Activated naive CD4-positive, alpha-beta T cell treated with anti-CD3 and anti-CD28 coated beads for 36 hours (primary cell): ENCODE measurements at regions of chr5 and their contacts with region 1.

Region 1: DNA sequence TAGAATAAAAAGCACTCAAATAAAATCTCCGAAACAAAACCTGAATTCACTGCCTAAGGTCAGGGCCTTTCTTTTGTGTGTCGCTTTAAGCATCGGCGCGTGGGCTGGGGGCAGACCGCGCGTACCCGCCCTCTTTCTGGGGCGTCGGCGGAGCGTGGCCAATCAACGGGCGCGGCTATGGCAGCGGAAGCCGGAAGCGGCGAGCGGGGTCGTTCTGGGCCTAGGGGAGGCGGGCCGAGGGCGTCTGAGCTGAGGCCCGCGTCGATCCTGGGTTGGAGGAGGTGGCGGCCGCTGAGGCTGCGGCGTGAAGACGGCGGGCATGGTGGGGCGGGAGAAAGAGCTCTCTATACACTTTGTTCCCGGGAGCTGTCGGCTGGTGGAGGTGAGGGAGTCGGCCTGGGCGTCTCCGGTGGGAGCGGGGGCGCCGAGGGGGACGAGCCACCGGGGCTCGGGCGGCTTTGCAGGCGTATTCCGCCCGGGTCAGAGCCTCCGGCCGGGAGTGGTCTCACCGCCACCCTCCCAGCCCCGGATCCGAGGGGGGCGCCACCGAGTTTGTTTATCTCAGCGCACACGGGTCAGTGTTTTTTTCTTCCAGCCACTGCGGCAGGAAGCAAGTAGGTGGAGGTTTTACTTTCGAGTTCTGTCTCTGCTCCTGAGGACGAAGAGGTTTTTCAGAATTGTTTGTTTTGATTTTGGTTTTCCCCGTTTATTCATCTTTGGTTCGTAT is at the start of gene MAT2B:
- DNase-seq: peak; percentile 95
- H3K4me3 Mint-ChIP-seq: peak within 1 kb of the TSS; percentile 85
- H3K27ac Mint-ChIP-seq: peak within 1 kb of the TSS; percentile 98
- H3K4me1 Mint-ChIP-seq: peaks cover 32% of the 10 kb centered on the region
- H3K27me3 Mint-ChIP-seq: no peaks in the 10 kb centered on the region
- total RNA-seq, gene MAT2B: 87.6 to 88.7 TPM

Region 2: DNA sequence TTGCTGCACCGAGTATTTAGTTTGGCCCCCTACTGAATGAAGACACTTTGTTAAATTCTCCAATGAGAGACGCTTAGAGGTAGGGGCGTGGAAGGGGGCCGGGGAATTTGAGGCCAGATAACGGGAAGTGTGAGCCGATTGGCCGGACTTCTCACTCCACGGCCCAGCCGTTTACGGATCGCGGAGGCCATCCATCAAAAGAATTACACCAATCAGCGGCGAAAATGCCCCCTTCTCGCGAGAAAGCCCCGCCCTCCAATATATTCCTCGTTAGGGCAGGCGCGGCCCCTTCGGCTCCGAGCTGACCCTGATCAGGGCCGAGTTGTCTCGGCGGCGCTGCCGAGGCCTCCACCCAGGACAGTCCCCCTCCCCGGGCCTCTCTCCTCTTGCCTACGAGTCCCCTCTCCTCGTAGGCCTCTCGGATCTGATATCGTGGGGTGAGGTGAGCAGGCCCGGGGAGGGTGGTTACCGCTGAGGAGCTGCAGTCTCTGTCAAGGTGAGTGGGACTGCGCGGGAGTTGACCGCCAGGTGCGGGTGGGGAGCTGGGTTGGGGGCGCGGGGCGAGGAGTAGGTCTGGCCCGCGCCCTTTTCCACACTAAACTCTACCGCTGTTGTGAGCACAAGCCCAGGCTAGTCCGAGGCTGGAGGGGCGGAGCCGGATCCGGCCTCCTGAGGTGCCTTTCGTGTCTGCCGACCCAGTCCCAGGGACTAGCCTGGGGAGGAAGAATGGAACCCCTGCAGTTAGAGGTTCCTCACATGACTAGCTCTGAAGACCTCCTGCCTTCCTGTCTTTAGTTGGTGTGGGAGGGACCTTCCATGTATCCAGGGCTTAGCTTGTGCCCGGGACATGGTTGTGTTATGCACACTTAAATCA is 68.0 kb before region 1 on chr5 and contains the start of gene CCNG1:
- CTCF ChIA-PET with region 1: interaction called, 5 read pairs
- intact Hi-C with region 1: loop called (anchors 1 kb)
- DNase-seq: peak; percentile 95
- H3K4me3 Mint-ChIP-seq: peak within 1 kb of the TSS; percentile 91
- H3K27ac Mint-ChIP-seq: peak within 1 kb of the TSS; percentile 90
- H3K4me1 Mint-ChIP-seq: peaks cover 44% of the 10 kb centered on the region
- H3K27me3 Mint-ChIP-seq: no peaks in the 10 kb centered on the region
- total RNA-seq, gene CCNG1: 213 to 227 TPM

Region 3: GRCh38 chr5:163459922-163460766 is 45.4 kb before region 1 on chr5 and contains the starts of genes HMMR and NUDCD2:
- CTCF ChIA-PET with region 1: interaction called, 6 read pairs
- intact Hi-C with region 1: loop called (anchors 1 kb)
- DNase-seq: peak; percentile 96
- H3K4me3 Mint-ChIP-seq: peak within 1 kb of the TSS; percentile 94
- H3K27ac Mint-ChIP-seq: peak within 1 kb of the TSS; percentile 100
- H3K4me1 Mint-ChIP-seq: peaks cover 27% of the 10 kb centered on the region
- H3K27me3 Mint-ChIP-seq: no peaks in the 10 kb centered on the region
- total RNA-seq, gene HMMR: 91.8 to 99.8 TPM
- total RNA-seq, gene NUDCD2: 51.5 to 55.5 TPM

Region 4: DNA sequence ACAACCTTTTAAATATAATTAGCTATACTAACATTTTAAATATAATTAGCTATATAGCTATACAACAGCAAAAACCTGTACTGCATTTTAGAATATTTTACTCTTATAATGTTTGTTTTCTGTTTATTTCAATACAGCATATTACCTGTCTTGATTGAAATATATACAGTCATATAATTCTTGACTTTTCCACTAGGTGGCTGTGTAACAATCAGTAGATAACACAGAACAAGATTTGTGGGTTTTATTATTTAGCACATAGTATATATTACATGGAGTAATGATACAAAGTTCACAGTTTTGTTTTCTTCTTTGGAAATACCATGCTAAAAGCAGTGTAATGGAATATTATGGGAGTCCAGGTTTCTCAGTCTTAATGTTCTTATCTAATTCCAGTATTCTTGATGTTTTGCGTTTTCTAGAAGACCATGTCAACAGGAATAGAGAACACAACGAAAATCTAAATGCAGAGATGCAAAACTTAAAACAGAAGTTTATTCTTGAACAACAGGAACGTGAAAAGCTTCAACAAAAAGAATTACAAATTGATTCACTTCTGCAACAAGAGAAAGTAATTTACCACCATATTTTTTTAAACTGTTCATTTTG is 31.8 kb before region 1 on chr5:
- CTCF ChIA-PET with region 1: interaction called, 7 read pairs
- intact Hi-C with region 1: loop called (anchors 1 kb)
- DNase-seq: no peak
- H3K4me3 Mint-ChIP-seq: no peak overlapping the region
- H3K27ac Mint-ChIP-seq: no peak overlapping the region
- H3K4me1 Mint-ChIP-seq: peaks cover 2% of the 10 kb centered on the region
- H3K27me3 Mint-ChIP-seq: no peaks in the 10 kb centered on the region